ENCODE measurements at regions of chr22 and their contacts with region 1.

Region 1: GRCh38 chr22:37686002-37686982 is at the start of gene NOL12:
- DNase-seq: peak; percentile 71 to 88 (median 79)
- H3K4me3 ChIP-seq: peak within 1 kb of the TSS; percentile 73
- H3K27ac ChIP-seq: peak within 1 kb of the TSS; percentile 76 to 82
- H3K4me1 ChIP-seq: peaks cover 2% of the 10 kb centered on the region
- H3K27me3 ChIP-seq: no peaks in the 10 kb centered on the region
- CTCF ChIP-seq: peak in 1 of 3 donors; percentile 35
- EP300 ChIP-seq: no peak
- POLR2A ChIP-seq: peak; percentile 57
- total RNA-seq, gene NOL12: 11.9 to 36.0 (median 20.3) TPM

Region 2: GRCh38 chr22:37581504-37581903 is 104.8 kb before region 1 on chr22:
- intact Hi-C with region 1: no loop called
- DNase-seq: no peak
- H3K4me3 ChIP-seq: no peak overlapping the region
- H3K27ac ChIP-seq: no peak overlapping the region
- H3K4me1 ChIP-seq: no peaks in the 10 kb centered on the region
- H3K27me3 ChIP-seq: no peaks in the 10 kb centered on the region
- CTCF ChIP-seq: no peak
- EP300 ChIP-seq: no peak
- POLR2A ChIP-seq: no peak

Region 3: DNA sequence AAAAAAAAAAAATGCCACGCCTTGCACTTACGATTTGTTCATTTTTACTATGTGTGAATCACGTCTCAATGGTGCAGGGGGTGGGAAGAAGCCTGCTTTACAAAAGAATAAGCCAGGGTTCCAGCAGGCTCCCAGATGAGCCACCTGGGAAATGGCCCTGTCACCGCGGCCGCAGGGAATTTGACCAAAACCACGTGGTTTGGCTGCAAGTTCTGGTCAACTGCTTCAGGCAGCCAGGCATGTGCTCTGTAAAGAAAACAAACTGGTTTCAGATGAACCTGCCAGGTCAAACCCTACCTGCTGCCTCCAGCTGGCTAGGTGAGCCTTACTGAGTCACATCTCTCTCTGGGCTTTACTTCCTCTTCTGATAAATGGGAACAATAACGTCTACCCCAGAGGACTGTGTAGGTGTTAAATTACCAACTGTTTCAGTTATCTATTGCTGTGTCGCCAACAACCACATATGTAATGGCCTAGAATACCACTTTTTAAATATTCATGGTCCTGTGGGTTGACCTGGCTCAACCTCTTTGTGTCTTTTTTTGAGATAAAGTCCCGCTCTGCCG is 90.9 kb after region 1 on chr22:
- intact Hi-C with region 1: loop called in 1 of 4 experiments (anchors 10 kb)
- DNase-seq: peak in 2 of 5 donors; percentile 56 to 58
- H3K4me3 ChIP-seq: no peak overlapping the region
- H3K27ac ChIP-seq: peak overlapping the region in 1 of 2 donors; percentile 46
- H3K4me1 ChIP-seq: peaks cover 10% of the 10 kb centered on the region
- H3K27me3 ChIP-seq: no peaks in the 10 kb centered on the region
- CTCF ChIP-seq: no peak
- EP300 ChIP-seq: no peak
- POLR2A ChIP-seq: no peak

Region 4: GRCh38 chr22:38153821-38154562 is 467.7 kb after region 1 on chr22:
- intact Hi-C with region 1: no loop called
- DNase-seq: peak in 1 of 5 donors; percentile 7
- H3K4me3 ChIP-seq: no peak overlapping the region
- H3K27ac ChIP-seq: no peak overlapping the region
- H3K4me1 ChIP-seq: no peaks in the 10 kb centered on the region
- H3K27me3 ChIP-seq: no peaks in the 10 kb centered on the region
- CTCF ChIP-seq: no peak
- EP300 ChIP-seq: no peak
- POLR2A ChIP-seq: no peak